AG04449 (cell line): ENCODE measurements at regions of chr9 and their contacts with region 1.

Region 1: DNA sequence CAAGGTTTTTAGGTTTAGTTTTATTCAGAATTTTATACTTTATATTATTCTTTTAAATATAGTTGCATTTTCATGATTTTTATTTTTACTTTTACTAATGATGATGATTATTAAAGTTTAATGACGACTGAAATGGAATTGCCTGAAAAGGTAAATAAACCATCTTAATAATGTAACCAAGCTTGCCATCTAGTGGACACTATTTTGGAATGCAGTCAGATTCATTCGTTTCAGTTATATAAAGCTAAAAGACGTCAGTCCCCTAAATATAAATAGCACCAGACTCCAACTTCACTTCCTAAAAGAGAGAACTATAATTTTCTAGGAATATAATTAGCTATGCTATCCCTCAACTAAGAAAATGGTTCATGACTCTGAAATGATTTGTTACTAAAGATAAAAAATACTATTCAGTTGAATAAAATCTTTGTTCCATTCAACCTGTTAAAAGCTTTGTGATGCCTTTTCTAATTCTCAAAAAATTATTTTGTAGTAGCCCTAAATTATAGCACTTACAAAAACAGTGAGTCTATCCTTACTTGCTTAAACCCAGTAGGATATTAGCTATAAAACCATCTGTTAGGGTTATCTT is 19.9 kb downstream of the ABITRAM start:
- DNase-seq: no peak
- H3K4me3 ChIP-seq: no peak overlapping the region
- CTCF ChIP-seq: peak; percentile 50

Region 2: GRCh38 chr9:108937561-108938305 is 16.3 kb before region 1 on chr9:
- CTCF ChIA-PET with region 1: interaction called, 23 read pairs
- POLR2A ChIA-PET with region 1: no interaction called
- DNase-seq: no peak
- H3K4me3 ChIP-seq: no peak overlapping the region
- CTCF ChIP-seq: no peak

Region 3: GRCh38 chr9:108972626-108973209 is 18.6 kb after region 1 on chr9:
- CTCF ChIA-PET with region 1: interaction called, 11 read pairs
- POLR2A ChIA-PET with region 1: no interaction called
- DNase-seq: no peak
- H3K4me3 ChIP-seq: no peak overlapping the region
- CTCF ChIP-seq: no peak

Region 4: DNA sequence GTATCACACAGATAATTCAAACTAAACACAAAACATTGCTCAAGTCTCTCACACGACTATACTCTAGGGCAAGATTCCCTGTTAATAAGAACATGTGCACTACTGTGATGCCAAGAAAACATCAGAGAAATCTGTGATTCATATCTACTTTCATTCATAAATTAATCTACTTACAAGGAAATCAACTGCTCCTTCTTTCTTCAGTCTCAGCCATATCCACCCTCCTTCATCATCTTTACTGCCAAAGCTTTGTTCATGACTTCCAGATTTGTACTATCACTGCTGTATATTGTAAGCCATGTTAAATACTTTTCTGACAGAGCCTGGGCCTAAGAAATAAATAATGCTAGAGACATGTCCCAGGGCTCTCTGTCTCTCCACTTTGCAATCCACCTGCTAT is 24.1 kb after region 1 on chr9:
- CTCF ChIA-PET with region 1: interaction called, 11 read pairs
- POLR2A ChIA-PET with region 1: no interaction called
- DNase-seq: no peak
- H3K4me3 ChIP-seq: no peak overlapping the region
- CTCF ChIP-seq: no peak